Right cardiac atrium (tissue), 5 donors: ENCODE measurements at regions of chr1 and their contacts with region 1.

Region 1: GRCh38 chr1:56390227-56390867 is 189.0 kb downstream of the PLPP3 start:
- DNase-seq: no peak
- ATAC-seq: no peak
- H3K4me3 ChIP-seq: no peak overlapping the region
- H3K27ac ChIP-seq: no peak overlapping the region
- H3K4me1 ChIP-seq: peaks cover 2% of the 10 kb centered on the region
- H3K27me3 ChIP-seq: no peaks in the 10 kb centered on the region

Region 2: DNA sequence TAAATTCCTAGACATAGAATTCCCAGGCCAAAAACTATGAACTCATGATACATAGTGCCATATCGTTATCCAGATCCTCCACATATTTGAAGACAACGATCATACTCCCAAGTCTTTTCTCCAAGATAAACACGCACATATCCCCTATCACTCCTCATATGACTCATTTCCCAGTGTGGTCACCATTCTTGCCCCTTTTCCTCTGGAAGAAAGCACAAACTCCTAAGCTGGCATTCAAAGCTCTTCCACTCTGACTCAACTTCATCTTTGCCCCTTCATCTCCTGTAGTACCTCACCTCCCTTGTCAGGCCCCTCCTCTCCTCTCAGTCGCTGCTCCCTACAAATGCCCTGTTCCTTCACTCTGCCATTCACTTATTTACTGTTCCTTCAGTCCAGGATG is 88.5 kb before region 1 on chr1:
- intact Hi-C with region 1: loop called in 1 of 4 experiments (anchors 10 kb)
- DNase-seq: no peak
- ATAC-seq: peak; percentile 17 to 49
- H3K4me3 ChIP-seq: no peak overlapping the region
- H3K27ac ChIP-seq: no peak overlapping the region
- H3K4me1 ChIP-seq: peaks cover 5% of the 10 kb centered on the region
- H3K27me3 ChIP-seq: no peaks in the 10 kb centered on the region

Region 3: DNA sequence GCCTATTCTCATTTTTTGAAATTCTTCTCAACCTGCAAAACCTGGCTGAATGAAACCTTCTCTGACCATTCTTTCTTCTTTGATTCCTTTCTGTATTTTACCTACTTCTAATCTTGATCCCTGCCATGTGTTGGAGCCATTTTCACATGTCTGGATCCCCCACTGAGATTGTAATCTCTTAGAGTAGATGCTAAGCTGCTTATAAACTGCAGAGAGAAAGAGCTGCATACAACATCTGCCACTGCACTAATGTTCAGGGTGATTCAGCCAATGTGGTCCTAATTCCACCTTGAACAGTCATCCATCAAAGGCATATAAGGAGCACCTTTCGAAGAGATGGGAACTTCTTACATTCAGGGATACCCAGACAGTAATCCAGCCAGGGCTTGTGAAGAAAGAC is 1049.7 kb after region 1 on chr1:
- intact Hi-C with region 1: no loop called
- DNase-seq: no peak
- ATAC-seq: no peak
- H3K4me3 ChIP-seq: no peak overlapping the region
- H3K27ac ChIP-seq: no peak overlapping the region
- H3K4me1 ChIP-seq: no peaks in the 10 kb centered on the region
- H3K27me3 ChIP-seq: no peaks in the 10 kb centered on the region